OCI-LY7 (cell line): ENCODE measurements at regions of chr9 and their contacts with region 1.

Region 1: GRCh38 chr9:6471231-6471850 is 58.3 kb downstream of the UHRF2 start:
- DNase-seq: no peak
- H3K4me3 ChIP-seq: no peak overlapping the region
- H3K27ac ChIP-seq: no peak overlapping the region
- H3K4me1 ChIP-seq: no peaks in the 10 kb centered on the region
- CTCF ChIP-seq: no peak

Region 2: GRCh38 chr9:6460189-6460768 is 11.1 kb before region 1 on chr9:
- CTCF ChIA-PET with region 1: no interaction called
- POLR2A ChIA-PET with region 1: interaction called, 15 read pairs
- intact Hi-C with region 1: no loop called
- DNase-seq: no peak
- H3K4me3 ChIP-seq: no peak overlapping the region
- H3K27ac ChIP-seq: no peak overlapping the region
- H3K4me1 ChIP-seq: no peaks in the 10 kb centered on the region
- CTCF ChIP-seq: no peak

Region 3: GRCh38 chr9:6498982-6499381 is 27.6 kb after region 1 on chr9:
- CTCF ChIA-PET with region 1: no interaction called
- POLR2A ChIA-PET with region 1: no interaction called
- intact Hi-C with region 1: no loop called
- DNase-seq: no peak
- H3K4me3 ChIP-seq: no peak overlapping the region
- H3K27ac ChIP-seq: no peak overlapping the region
- H3K4me1 ChIP-seq: no peaks in the 10 kb centered on the region
- CTCF ChIP-seq: no peak

Region 4: GRCh38 chr9:6512085-6512657 is 40.8 kb after region 1 on chr9:
- CTCF ChIA-PET with region 1: no interaction called
- POLR2A ChIA-PET with region 1: no interaction called
- intact Hi-C with region 1: loop called (anchors 5 kb)
- DNase-seq: no peak
- H3K4me3 ChIP-seq: no peak overlapping the region
- H3K27ac ChIP-seq: no peak overlapping the region
- H3K4me1 ChIP-seq: no peaks in the 10 kb centered on the region
- CTCF ChIP-seq: no peak

Region 5: GRCh38 chr9:6598249-6598725 is 126.9 kb after region 1 on chr9:
- CTCF ChIA-PET with region 1: no interaction called
- POLR2A ChIA-PET with region 1: no interaction called
- intact Hi-C with region 1: no loop called
- DNase-seq: no peak
- H3K4me3 ChIP-seq: no peak overlapping the region
- H3K27ac ChIP-seq: no peak overlapping the region
- H3K4me1 ChIP-seq: no peaks in the 10 kb centered on the region
- CTCF ChIP-seq: no peak